T-cell (primary cell): ENCODE measurements at regions of chr11 and their contacts with region 1.

Region 1: GRCh38 chr11:95705485-95706124 is 84.0 kb downstream of the FAM76B start:
- DNase-seq: peak; percentile 68 to 93 (median 82)
- ATAC-seq: peak; percentile 89 to 95 (median 92)
- H3K4me3 ChIP-seq: no peak overlapping the region
- H3K4me3 Mint-ChIP-seq: no peak overlapping the region
- H3K27ac ChIP-seq: peak overlapping the region; percentile 48
- H3K27ac Mint-ChIP-seq: no peak overlapping the region
- H3K4me1 ChIP-seq: peaks cover 0 to 28% of the 10 kb centered on the region in 2 experiments
- H3K4me1 Mint-ChIP-seq: peaks cover 9% of the 10 kb centered on the region in 3 donors
- H3K27me3 ChIP-seq: no peaks in the 10 kb centered on the region
- H3K27me3 Mint-ChIP-seq: peaks cover 2 to 3% of the 10 kb centered on the region in 2 donors

Region 2: GRCh38 chr11:95067039-95067840 is 638.4 kb before region 1 on chr11:
- CTCF ChIA-PET with region 1: interaction called in 1 of 2 experiments, 11 read pairs
- POLR2A ChIA-PET with region 1: no interaction called
- DNase-seq: peak; percentile 34 to 83 (median 60)
- ATAC-seq: peak; percentile 74 to 78 (median 77)
- H3K4me3 ChIP-seq: peak overlapping the region; percentile 72 to 93
- H3K4me3 Mint-ChIP-seq: peak overlapping the region; percentile 94 to 100 (median 97)
- H3K27ac ChIP-seq: peak overlapping the region; percentile 91
- H3K27ac Mint-ChIP-seq: peak overlapping the region; percentile 97 to 99
- H3K4me1 ChIP-seq: peaks cover 9% of the 10 kb centered on the region in 2 experiments
- H3K4me1 Mint-ChIP-seq: peaks cover 30 to 40% (median 31%) of the 10 kb centered on the region in 3 donors
- H3K27me3 ChIP-seq: no peaks in the 10 kb centered on the region
- H3K27me3 Mint-ChIP-seq: no peaks in the 10 kb centered on the region

Region 3: DNA sequence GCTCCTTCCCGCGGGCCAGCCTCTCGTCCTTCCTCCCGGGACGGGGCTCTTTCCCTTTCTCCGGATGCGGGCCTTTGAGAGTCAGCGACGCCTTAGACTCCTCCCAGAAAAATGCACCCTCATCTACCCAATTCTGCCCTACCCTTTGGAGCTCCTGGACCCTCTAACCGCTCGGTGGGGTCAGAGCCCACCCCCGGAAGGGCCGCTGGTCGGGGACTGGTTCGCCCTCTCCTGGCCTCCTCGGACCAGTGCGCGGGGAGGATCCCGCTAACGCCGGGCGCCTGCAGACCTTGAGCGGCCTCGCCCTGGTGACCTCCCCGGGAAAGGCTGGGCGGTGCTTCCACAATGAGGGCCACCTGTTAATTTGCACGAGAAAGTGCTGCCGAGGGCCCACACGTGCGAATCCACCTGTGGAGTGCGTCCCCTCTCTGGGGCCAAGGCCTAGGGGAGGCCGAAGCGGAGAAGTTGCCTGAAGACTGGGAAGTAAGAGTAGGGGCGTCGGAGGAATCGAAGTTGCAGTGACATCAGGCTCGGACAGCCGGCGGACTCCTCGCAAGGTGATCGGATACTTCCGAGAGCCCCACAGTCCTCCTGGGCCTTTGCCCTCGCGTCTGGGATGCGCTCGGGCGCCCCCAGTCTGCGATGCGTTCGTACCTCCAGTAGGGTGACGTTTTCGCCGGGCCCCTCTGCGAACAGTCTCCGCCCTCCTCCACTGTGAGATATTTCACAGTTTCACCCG is 554.5 kb before region 1 on chr11:
- CTCF ChIA-PET with region 1: interaction called, 55 to 179 read pairs
- POLR2A ChIA-PET with region 1: interaction called in 1 of 2 experiments, 3 read pairs
- DNase-seq: peak; percentile 79 to 96 (median 89)
- ATAC-seq: peak; percentile 90 to 94 (median 92)
- H3K4me3 ChIP-seq: peak overlapping the region; percentile 90 to 92
- H3K4me3 Mint-ChIP-seq: peak overlapping the region; percentile 82 to 91 (median 84)
- H3K27ac ChIP-seq: peak overlapping the region; percentile 87
- H3K27ac Mint-ChIP-seq: peak overlapping the region; percentile 99
- H3K4me1 ChIP-seq: peaks cover 11 to 43% of the 10 kb centered on the region in 2 experiments
- H3K4me1 Mint-ChIP-seq: peaks cover 35 to 40% (median 39%) of the 10 kb centered on the region in 3 donors
- H3K27me3 ChIP-seq: peaks cover 0 to 11% of the 10 kb centered on the region in 2 experiments
- H3K27me3 Mint-ChIP-seq: peaks cover 6% of the 10 kb centered on the region in 2 donors

Region 4: GRCh38 chr11:95156916-95157541 is 548.6 kb before region 1 on chr11:
- CTCF ChIA-PET with region 1: interaction called, 55 to 179 read pairs
- POLR2A ChIA-PET with region 1: interaction called in 1 of 2 experiments, 3 read pairs
- DNase-seq: no peak
- ATAC-seq: no peak
- H3K4me3 ChIP-seq: no peak overlapping the region
- H3K4me3 Mint-ChIP-seq: no peak overlapping the region
- H3K27ac ChIP-seq: no peak overlapping the region
- H3K27ac Mint-ChIP-seq: peak overlapping the region; percentile 79 to 85
- H3K4me1 ChIP-seq: peaks cover 9 to 37% of the 10 kb centered on the region in 2 experiments
- H3K4me1 Mint-ChIP-seq: peaks cover 43 to 58% (median 52%) of the 10 kb centered on the region in 3 donors
- H3K27me3 ChIP-seq: no peaks in the 10 kb centered on the region
- H3K27me3 Mint-ChIP-seq: no peaks in the 10 kb centered on the region

Region 5: DNA sequence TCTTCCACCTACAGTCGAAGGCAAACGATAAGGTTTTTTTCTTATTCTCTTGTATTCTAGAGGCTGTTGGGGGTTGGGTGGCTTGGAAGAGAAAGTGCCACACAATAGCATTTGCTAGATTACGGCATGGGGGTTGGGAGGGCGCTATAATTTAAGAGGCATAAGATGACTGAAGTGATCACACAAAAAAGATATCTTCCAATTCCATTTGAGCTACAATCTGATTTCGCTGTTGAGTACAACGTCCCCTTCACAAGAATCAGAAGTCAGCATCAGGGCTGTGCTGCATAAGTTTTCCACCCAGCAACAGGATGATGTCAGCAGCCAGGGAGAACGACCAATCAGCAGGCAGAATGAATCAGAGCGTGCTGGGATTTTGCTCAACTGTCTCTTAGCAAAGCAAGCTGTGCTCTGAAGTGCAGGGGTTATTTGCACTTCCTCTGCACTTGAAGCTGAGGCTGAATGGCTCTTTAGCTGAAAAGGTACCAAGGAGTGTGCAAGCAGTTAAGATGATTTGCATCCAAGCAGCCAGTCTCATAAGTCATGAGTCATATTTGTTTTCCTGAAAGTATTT is 451.4 kb before region 1 on chr11:
- CTCF ChIA-PET with region 1: interaction called, 6 to 13 read pairs
- POLR2A ChIA-PET with region 1: no interaction called
- DNase-seq: peak; percentile 57 to 91 (median 80)
- ATAC-seq: peak; percentile 99
- H3K4me3 ChIP-seq: peak overlapping the region; percentile 45 to 64
- H3K4me3 Mint-ChIP-seq: peak overlapping the region; percentile 76 to 80 (median 78)
- H3K27ac ChIP-seq: peak overlapping the region; percentile 73
- H3K27ac Mint-ChIP-seq: peak overlapping the region; percentile 84 to 93
- H3K4me1 ChIP-seq: peaks cover 31 to 38% of the 10 kb centered on the region in 2 experiments
- H3K4me1 Mint-ChIP-seq: peaks cover 40 to 51% (median 43%) of the 10 kb centered on the region in 3 donors
- H3K27me3 ChIP-seq: no peaks in the 10 kb centered on the region
- H3K27me3 Mint-ChIP-seq: no peaks in the 10 kb centered on the region

Region 6: GRCh38 chr11:95443386-95443785 is 262.2 kb before region 1 on chr11:
- CTCF ChIA-PET with region 1: no interaction called
- POLR2A ChIA-PET with region 1: no interaction called
- DNase-seq: peak in 8 of 35 experiments; percentile 0 to 44 (median 6)
- ATAC-seq: peak in 3 of 4 experiments; percentile 46 to 53 (median 47)
- H3K4me3 ChIP-seq: no peak overlapping the region
- H3K4me3 Mint-ChIP-seq: no peak overlapping the region
- H3K27ac ChIP-seq: no peak overlapping the region
- H3K27ac Mint-ChIP-seq: no peak overlapping the region
- H3K4me1 ChIP-seq: peaks cover 0 to 4% of the 10 kb centered on the region in 2 experiments
- H3K4me1 Mint-ChIP-seq: peaks cover 0 to 23% (median 19%) of the 10 kb centered on the region in 3 donors
- H3K27me3 ChIP-seq: peaks cover 0 to 5% of the 10 kb centered on the region in 2 experiments
- H3K27me3 Mint-ChIP-seq: no peaks in the 10 kb centered on the region

Region 7: DNA sequence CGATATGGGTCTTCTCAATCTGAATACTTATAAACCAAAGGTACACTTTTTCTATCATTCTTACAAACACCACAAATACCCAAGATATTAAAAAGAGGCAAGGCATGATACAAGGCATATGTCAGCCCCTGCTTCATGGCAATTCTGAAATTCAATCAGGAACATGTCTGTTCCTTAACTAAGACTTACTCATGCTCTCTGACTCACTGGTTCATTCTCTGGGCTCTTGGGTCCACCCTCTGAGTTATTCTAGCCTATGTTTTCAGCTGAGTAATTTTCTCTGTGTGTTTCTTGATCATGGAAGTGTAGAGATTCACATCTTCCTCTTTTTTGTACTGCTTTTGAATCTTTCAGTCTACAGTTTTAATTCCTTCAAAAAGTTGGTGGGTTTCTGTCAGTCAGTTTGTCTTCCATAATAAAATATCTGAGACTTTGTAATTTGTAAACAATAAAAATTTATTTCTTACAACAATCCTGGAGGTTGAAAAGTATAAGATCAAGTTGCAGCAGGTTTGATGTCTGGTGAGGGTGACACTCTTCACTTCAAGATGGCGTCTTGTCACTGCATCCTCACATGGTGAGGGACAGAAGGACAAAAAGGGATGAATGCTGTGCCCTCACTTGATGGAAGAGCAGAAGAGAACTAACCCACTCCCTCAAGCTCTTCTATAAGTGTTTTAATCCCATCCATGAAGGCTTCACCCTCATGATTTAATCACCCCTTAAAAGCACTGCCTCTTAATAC is 127.7 kb before region 1 on chr11:
- CTCF ChIA-PET with region 1: interaction called in 1 of 2 experiments, 11 read pairs
- POLR2A ChIA-PET with region 1: no interaction called
- DNase-seq: peak in 2 of 35 experiments; percentile 0 to 2
- ATAC-seq: peak in 1 of 4 experiments; percentile 75
- H3K4me3 ChIP-seq: no peak overlapping the region
- H3K4me3 Mint-ChIP-seq: no peak overlapping the region
- H3K27ac ChIP-seq: no peak overlapping the region
- H3K27ac Mint-ChIP-seq: no peak overlapping the region
- H3K4me1 ChIP-seq: no peaks in the 10 kb centered on the region
- H3K4me1 Mint-ChIP-seq: peaks cover 0 to 2% (median 1%) of the 10 kb centered on the region in 3 donors
- H3K27me3 ChIP-seq: no peaks in the 10 kb centered on the region
- H3K27me3 Mint-ChIP-seq: no peaks in the 10 kb centered on the region

Region 8: DNA sequence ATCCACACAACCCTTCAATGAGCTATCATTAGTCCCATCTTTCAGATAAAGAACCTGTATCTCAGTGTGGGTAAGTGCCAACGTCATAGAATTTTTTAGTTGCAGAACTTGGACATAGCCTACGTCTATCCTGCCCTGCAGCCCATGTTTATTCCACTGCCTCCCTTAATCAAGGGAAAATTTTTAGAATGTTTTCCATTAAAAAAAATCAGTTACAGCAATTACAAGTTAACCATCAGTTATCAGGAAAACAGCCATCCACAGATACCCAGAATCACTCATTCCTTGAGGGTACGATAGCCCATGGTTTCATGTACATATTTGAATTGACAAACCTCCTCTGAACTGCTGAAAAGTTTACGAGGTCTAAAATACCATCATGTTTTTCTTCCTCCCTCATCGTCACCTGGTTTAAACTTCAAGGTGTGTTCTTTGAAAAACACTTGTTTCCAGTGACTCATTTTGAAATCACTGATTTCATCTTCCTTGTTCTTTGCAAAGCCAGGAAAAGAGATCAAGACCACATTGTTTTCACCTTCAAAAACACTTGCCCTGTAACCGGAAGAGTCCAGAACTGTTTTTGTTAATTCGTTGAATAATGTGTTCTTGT is 16.9 kb before region 1 on chr11:
- CTCF ChIA-PET with region 1: interaction called, 25 to 38 read pairs
- POLR2A ChIA-PET with region 1: interaction called, 6 to 13 read pairs
- DNase-seq: peak in 9 of 35 experiments; percentile 6 to 56 (median 24)
- ATAC-seq: peak; percentile 79 to 86 (median 84)
- H3K4me3 ChIP-seq: no peak overlapping the region
- H3K4me3 Mint-ChIP-seq: no peak overlapping the region
- H3K27ac ChIP-seq: peak overlapping the region; percentile 62
- H3K27ac Mint-ChIP-seq: no peak overlapping the region
- H3K4me1 ChIP-seq: peaks cover 0 to 10% of the 10 kb centered on the region in 2 experiments
- H3K4me1 Mint-ChIP-seq: peaks cover 31 to 35% (median 33%) of the 10 kb centered on the region in 3 donors
- H3K27me3 ChIP-seq: no peaks in the 10 kb centered on the region
- H3K27me3 Mint-ChIP-seq: no peaks in the 10 kb centered on the region

Region 9: DNA sequence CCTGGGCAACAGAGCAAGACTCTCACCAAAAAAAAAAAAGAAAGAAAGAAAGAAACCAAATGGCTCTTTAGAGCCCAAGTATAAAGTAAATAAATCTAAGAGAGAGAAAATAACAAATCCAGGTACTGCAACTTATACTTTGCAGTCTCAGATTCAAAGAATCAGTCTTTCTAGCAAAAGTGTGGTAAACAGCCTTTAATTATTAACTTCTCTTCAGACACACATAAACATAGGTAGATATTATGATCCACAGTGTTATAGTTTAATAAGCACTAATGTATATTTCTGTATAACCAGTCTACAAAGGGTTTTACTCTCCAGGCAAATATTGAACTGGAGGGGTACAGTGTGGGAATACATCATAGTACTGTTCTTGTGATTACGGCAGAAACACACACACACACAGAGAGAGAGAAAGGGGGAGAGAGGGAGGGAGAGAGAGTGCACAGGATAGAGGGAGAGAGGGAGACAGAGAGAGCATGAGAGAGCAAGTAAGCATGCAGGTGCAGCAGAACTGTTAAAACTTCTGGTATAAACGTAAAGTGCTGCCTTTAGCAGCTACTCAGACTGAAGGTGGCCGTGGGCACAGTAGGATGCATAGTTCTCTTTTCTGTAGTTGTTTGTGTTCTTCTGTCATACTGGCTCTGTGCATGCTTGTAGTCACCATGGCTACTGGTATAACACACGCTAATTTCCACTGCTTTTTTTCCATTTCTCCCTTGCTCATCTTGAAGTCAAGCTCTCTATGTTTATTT is 186.0 kb after region 1 on chr11:
- CTCF ChIA-PET with region 1: no interaction called
- POLR2A ChIA-PET with region 1: no interaction called
- DNase-seq: no peak
- ATAC-seq: no peak
- H3K4me3 ChIP-seq: no peak overlapping the region
- H3K4me3 Mint-ChIP-seq: no peak overlapping the region
- H3K27ac ChIP-seq: no peak overlapping the region
- H3K27ac Mint-ChIP-seq: no peak overlapping the region
- H3K4me1 ChIP-seq: no peaks in the 10 kb centered on the region
- H3K4me1 Mint-ChIP-seq: peaks cover 7 to 8% (median 7%) of the 10 kb centered on the region in 3 donors
- H3K27me3 ChIP-seq: no peaks in the 10 kb centered on the region
- H3K27me3 Mint-ChIP-seq: no peaks in the 10 kb centered on the region